HCT116 (cell line): ENCODE measurements at regions of chr4 and their contacts with region 1.

Region 1: DNA sequence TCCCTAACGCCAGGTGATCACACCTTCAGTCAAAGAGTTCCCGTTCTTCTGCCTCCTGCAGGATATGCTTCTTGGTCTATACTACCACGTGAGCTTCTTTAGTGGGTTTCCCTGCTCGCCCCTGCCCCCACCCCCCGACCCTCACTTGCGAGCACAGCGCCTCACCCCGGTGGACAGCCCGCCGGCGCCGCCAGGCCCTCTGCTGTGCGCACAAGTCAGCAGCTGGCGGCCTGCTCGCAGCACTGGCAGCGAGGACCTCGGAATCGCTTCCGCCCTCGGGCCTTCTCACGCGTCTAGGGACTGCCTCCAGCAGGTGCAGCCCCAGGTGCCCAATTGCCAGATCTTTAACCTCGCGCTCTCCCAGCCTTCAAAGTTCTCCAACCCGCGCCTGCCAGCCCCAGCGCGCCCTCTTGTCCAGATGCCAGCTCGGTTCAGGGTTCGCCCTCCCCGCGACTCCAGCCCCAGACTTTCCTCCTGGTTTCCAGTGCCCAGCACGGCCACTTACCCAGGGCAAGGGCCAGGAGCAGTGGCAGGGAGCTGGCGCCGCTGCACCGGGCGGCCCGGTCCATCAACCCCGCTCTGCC is 474 bp downstream of the BTC start:
- DNase-seq: no peak
- ATAC-seq: peak; percentile 83
- H3K4me3 ChIP-seq: peak overlapping the region; percentile 61 to 69
- H3K27ac ChIP-seq: peak overlapping the region; percentile 84
- H3K4me1 ChIP-seq: peaks cover 9 to 19% of the 10 kb centered on the region in 2 experiments
- H3K27me3 ChIP-seq: no peaks in the 10 kb centered on the region
- CTCF ChIP-seq: peak; percentile 76 to 82 (median 77)
- POLR2A ChIP-seq: peak; percentile 27
- RAD21 ChIP-seq: peak; percentile 36; the same call in 1 of the 2 replicates

Region 2: GRCh38 chr4:74370912-74371311 is 422.9 kb before region 1 on chr4:
- CTCF ChIA-PET with region 1: no interaction called
- POLR2A ChIA-PET with region 1: no interaction called
- RAD21 ChIA-PET with region 1: no interaction called
- intact Hi-C with region 1: loop called (anchors 5 kb)
- DNase-seq: peak; percentile 70
- ATAC-seq: peak; percentile 63
- H3K4me3 ChIP-seq: peak overlapping the region in 1 of 2 experiments; percentile 8; a peak in 1 of 4 replicates
- H3K27ac ChIP-seq: peak overlapping the region; percentile 94
- H3K4me1 ChIP-seq: peaks cover 83 to 98% of the 10 kb centered on the region in 2 experiments
- H3K27me3 ChIP-seq: no peaks in the 10 kb centered on the region
- CTCF ChIP-seq: peak in 2 of 3 experiments; percentile 73 to 87; a peak in 4 of 6 replicates
- POLR2A ChIP-seq: no peak
- RAD21 ChIP-seq: no peak